ENCODE measurements at regions of chr7 and their contacts with region 1.

Region 1: GRCh38 chr7:91824201-91824600 is 56.3 kb downstream of the MTERF1 start:
- DNase-seq: no peak
- H3K4me3 ChIP-seq: no peak overlapping the region
- H3K27ac ChIP-seq: no peak overlapping the region
- H3K4me1 ChIP-seq: no peaks in the 10 kb centered on the region
- H3K27me3 ChIP-seq: no peaks in the 10 kb centered on the region
- CTCF ChIP-seq: no peak

Region 2: GRCh38 chr7:91852263-91852741 is 28.1 kb after region 1 on chr7:
- intact Hi-C with region 1: no loop called
- DNase-seq: no peak
- H3K4me3 ChIP-seq: no peak overlapping the region
- H3K27ac ChIP-seq: no peak overlapping the region
- H3K4me1 ChIP-seq: no peaks in the 10 kb centered on the region
- H3K27me3 ChIP-seq: no peaks in the 10 kb centered on the region
- CTCF ChIP-seq: no peak

Region 3: DNA sequence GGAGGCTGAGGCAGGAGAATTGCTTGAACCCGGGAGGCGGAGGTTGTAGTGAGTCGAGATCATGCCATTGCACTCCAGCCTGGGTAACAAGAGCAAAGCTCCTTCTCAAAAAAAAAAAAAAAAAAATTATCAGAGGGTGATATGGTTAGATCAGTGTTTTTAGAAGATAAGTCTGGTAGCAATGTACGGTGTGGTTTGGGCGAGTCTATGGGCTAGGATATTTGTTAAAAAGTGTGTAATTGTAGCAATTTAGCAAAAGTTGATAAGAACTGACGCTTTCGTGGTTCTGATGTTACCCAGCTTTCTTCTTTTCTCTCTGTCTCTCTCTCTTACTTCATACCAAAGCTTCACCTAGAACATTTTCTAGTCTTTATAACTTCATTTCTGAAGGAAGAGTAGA is 317.0 kb after region 1 on chr7:
- intact Hi-C with region 1: loop called (anchors 5 kb)
- DNase-seq: no peak
- H3K4me3 ChIP-seq: no peak overlapping the region
- H3K27ac ChIP-seq: no peak overlapping the region
- H3K4me1 ChIP-seq: no peaks in the 10 kb centered on the region
- H3K27me3 ChIP-seq: no peaks in the 10 kb centered on the region
- CTCF ChIP-seq: no peak

Region 4: DNA sequence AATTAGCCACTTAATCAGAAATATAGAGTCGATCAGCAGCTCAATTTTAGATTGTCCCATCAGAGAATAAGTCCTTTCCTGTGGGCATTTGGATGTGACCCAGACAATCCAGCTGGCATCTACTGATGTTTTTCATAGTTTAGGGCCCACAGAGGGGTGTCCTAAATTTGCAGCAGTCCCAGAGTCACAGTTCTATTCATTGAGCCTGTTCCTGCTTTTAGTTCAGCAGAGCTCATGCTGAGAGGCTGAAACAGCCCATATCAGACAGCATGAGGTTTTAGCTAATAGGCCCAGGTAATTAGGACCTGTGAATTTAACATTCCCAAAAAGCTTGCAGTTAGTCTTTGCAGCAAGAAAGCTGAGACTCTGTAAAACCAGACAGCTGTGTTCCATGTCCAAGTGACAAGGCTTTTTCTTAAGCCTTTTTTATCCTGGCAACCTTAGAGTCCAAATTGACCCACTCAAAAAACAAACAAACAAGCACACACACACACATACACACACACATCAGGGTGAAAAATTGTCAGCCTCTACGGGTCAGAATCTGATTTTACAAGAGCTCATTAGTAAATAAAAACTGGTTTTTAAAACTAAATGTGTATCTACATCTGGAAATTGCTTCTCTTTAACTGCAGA is 455.3 kb after region 1 on chr7:
- intact Hi-C with region 1: no loop called
- DNase-seq: no peak
- H3K4me3 ChIP-seq: no peak overlapping the region
- H3K27ac ChIP-seq: peak overlapping the region; percentile 4 to 26
- H3K4me1 ChIP-seq: peaks cover 0 to 54% (median 23%) of the 10 kb centered on the region in 4 donors
- H3K27me3 ChIP-seq: no peaks in the 10 kb centered on the region
- CTCF ChIP-seq: no peak

Measured in tibial artery (tissue), 4 donors.